PC-3 (cell line): ENCODE measurements at regions of chr7 and their contacts with region 1.

Region 1: GRCh38 chr7:44986218-44987053 is 7.6 kb upstream of the MYO1G start:
- DNase-seq: peak; percentile 94
- ATAC-seq: peak; percentile 98
- H3K4me3 ChIP-seq: peak overlapping the region; percentile 92
- H3K27ac ChIP-seq: peak overlapping the region; percentile 69
- H3K4me1 ChIP-seq: peaks cover 19% of the 10 kb centered on the region
- H3K27me3 ChIP-seq: no peaks in the 10 kb centered on the region
- CTCF ChIP-seq: no peak

Region 2: GRCh38 chr7:44885394-44886317 is 100.8 kb before region 1 on chr7 and contains the start of gene PURB:
- CTCF ChIA-PET with region 1: no interaction called
- POLR2A ChIA-PET with region 1: no interaction called
- intact Hi-C with region 1: loop called (anchors 5 kb)
- DNase-seq: peak; percentile 98
- ATAC-seq: peak; percentile 87
- H3K4me3 ChIP-seq: peak within 1 kb of the TSS; percentile 76
- H3K27ac ChIP-seq: peak within 1 kb of the TSS; percentile 96
- H3K4me1 ChIP-seq: peaks cover 41% of the 10 kb centered on the region
- H3K27me3 ChIP-seq: no peaks in the 10 kb centered on the region
- CTCF ChIP-seq: no peak
- total RNA-seq, gene PURB: 8.9 and 14.6 TPM in 2 replicates

Region 3: GRCh38 chr7:45007571-45008328 is 21.3 kb after region 1 on chr7:
- CTCF ChIA-PET with region 1: no interaction called
- POLR2A ChIA-PET with region 1: no interaction called
- intact Hi-C with region 1: no loop called
- DNase-seq: no peak
- ATAC-seq: no peak
- H3K4me3 ChIP-seq: no peak overlapping the region
- H3K27ac ChIP-seq: no peak overlapping the region
- H3K4me1 ChIP-seq: no peaks in the 10 kb centered on the region
- H3K27me3 ChIP-seq: no peaks in the 10 kb centered on the region
- CTCF ChIP-seq: no peak

Region 4: GRCh38 chr7:45111298-45112223 is 125.1 kb after region 1 on chr7 and contains the start of gene TBRG4:
- CTCF ChIA-PET with region 1: interaction called, 5 read pairs
- POLR2A ChIA-PET with region 1: no interaction called
- intact Hi-C with region 1: loop called (anchors 1 kb)
- DNase-seq: peak; percentile 95
- ATAC-seq: peak; percentile 93
- H3K4me3 ChIP-seq: peak within 1 kb of the TSS; percentile 94
- H3K27ac ChIP-seq: peak within 1 kb of the TSS; percentile 82
- H3K4me1 ChIP-seq: peaks cover 30% of the 10 kb centered on the region
- H3K27me3 ChIP-seq: no peaks in the 10 kb centered on the region
- CTCF ChIP-seq: peak; percentile 54
- total RNA-seq, gene TBRG4: 107 and 139 TPM in 2 replicates